ENCODE measurements at regions of chr19 and their contacts with region 1.

Region 1: GRCh38 chr19:19489804-19490655 is 25.3 kb downstream of the TSSK6 start:
- DNase-seq: peak; percentile 89
- ATAC-seq: peak; percentile 69

Region 2: DNA sequence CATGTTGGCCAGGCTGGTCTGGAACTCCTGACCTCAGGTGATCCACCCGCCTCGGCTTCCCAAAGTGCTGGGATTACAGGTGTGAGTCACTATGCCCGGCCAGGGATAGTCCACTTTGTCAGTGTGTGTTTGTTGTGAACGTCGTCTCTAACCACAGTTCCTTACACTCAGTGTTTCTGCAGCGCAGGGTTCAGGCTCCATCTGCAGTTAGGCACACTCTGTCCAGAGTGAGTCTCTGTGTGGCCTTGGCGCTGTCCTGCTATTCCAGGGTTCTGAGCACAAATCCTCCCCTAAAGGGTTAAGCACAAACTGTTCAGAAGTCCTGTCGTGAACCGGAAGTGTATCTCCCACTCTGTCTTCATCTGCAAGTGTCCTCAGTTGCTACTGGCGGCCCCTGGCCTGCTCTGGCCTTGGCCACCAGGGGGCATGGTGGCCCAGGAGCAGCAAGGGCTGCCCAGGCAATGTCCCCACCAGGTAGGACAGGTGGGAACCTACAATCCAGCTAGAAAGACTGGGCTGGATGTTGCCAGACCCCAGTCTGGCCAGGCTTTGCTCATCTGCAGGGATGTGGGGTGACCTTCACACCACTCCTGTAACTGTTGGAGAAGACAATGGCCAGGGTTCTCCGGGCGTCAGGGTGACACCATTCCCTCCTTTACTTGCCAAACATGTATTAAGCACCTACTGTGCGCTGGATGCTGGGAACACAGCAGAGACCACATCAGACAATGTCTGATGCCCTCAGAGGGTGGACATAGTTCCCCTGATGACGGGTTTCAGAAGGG is 123.2 kb before region 1 on chr19:
- intact Hi-C with region 1: loop called (anchors 5 kb)
- DNase-seq: no peak
- ATAC-seq: peak; percentile 77

Measured in sciatic nerve (tissue), 2 donors.